ENCODE measurements at regions of chr21 and their contacts with region 1.

Region 1: DNA sequence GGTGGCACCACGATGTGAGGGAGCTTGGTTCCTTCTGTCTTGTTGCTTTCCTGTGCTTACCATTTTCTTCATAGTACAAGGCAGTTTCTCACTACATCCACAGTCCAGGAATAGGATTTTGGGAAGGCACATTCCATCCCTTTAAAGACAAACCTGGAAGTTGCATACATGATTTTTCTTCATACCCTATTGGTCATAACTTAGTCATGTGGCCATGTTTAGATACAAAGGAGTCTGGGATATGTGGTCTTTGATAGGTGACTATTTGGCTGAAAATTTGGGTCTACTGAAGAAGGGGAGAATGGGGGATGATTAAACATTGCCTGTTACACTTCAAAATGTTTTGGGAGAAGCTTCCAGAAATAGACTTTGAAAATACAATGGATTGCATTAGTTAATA is 7.0 kb downstream of the DYRK1A start:
- DNase-seq: no peak
- ATAC-seq: no peak
- H3K4me3 ChIP-seq: no peak overlapping the region
- H3K4me3 Mint-ChIP-seq: peak overlapping the region; percentile 50
- H3K27ac ChIP-seq: peak overlapping the region in 1 of 2 experiments; percentile 41
- H3K27ac Mint-ChIP-seq: peak overlapping the region; percentile 32
- H3K4me1 ChIP-seq: peaks cover 87% of the 10 kb centered on the region
- H3K4me1 Mint-ChIP-seq: peaks cover 93% of the 10 kb centered on the region
- H3K27me3 ChIP-seq: no peaks in the 10 kb centered on the region
- H3K27me3 Mint-ChIP-seq: no peaks in the 10 kb centered on the region
- CTCF ChIP-seq: no peak

Region 2: GRCh38 chr21:37415939-37416338 is 42.4 kb after region 1 on chr21:
- CTCF ChIA-PET with region 1: no interaction called
- POLR2A ChIA-PET with region 1: no interaction called
- intact Hi-C with region 1: loop called in 1 of 2 experiments (anchors 2 kb)
- DNase-seq: peak in 1 of 9 experiments; percentile 25
- ATAC-seq: no peak
- H3K4me3 ChIP-seq: no peak overlapping the region
- H3K4me3 Mint-ChIP-seq: no peak overlapping the region
- H3K27ac ChIP-seq: peak overlapping the region in 1 of 2 experiments; percentile 33
- H3K27ac Mint-ChIP-seq: peak overlapping the region; percentile 2
- H3K4me1 ChIP-seq: peaks cover 69% of the 10 kb centered on the region
- H3K4me1 Mint-ChIP-seq: peaks cover 90% of the 10 kb centered on the region
- H3K27me3 ChIP-seq: no peaks in the 10 kb centered on the region
- H3K27me3 Mint-ChIP-seq: no peaks in the 10 kb centered on the region
- CTCF ChIP-seq: no peak